AG04449 (cell line): ENCODE measurements at regions of chr17 and their contacts with region 1.

Region 1: DNA sequence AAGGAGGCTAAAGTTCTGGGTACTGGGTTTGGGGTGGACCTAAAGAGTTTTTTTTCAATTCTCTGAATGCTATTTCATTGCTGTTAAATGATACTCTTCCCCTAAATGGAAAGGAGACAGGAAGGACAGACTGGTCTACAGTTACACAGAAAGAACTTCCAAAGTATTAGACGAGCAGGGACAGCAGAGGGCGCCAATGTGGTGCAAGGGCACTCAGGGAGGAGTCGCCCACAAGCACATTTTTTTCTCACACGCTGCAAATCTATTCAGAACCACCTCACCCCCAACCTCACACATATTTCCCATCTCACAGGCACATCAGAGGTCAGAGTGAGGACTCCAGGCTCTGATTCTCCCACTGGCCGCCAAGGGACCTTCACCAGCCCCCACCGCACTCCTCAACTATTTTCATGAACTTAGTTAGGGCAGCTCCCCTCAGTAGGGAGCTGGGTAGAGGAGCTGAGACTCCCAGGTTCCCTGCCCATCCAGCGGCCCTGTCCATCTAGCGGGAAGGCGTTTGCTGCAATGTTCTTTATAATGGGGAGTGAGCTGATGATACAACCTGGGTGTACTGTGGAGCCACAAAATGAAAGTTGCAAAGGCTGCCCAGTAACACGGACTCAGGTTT is 6.8 kb upstream of the CA4 start:
- DNase-seq: peak; percentile 51
- H3K4me3 ChIP-seq: no peak overlapping the region
- CTCF ChIP-seq: peak; percentile 84

Region 2: GRCh38 chr17:60154616-60155426 is 11.8 kb after region 1 on chr17:
- CTCF ChIA-PET with region 1: interaction called, 71 read pairs
- POLR2A ChIA-PET with region 1: interaction called, 3 read pairs
- DNase-seq: peak; percentile 31
- H3K4me3 ChIP-seq: no peak overlapping the region
- CTCF ChIP-seq: no peak

Region 3: GRCh38 chr17:60169921-60170742 is 27.1 kb after region 1 on chr17:
- CTCF ChIA-PET with region 1: interaction called, 32 read pairs
- POLR2A ChIA-PET with region 1: no interaction called
- DNase-seq: no peak
- H3K4me3 ChIP-seq: no peak overlapping the region
- CTCF ChIP-seq: no peak

Region 4: GRCh38 chr17:60231234-60231633 is 88.2 kb after region 1 on chr17:
- CTCF ChIA-PET with region 1: interaction called, 31 read pairs
- POLR2A ChIA-PET with region 1: interaction called, 3 read pairs
- DNase-seq: no peak
- H3K4me3 ChIP-seq: no peak overlapping the region
- CTCF ChIP-seq: peak; percentile 32

Region 5: GRCh38 chr17:60435244-60436167 is 292.5 kb after region 1 on chr17:
- CTCF ChIA-PET with region 1: interaction called, 18 read pairs
- POLR2A ChIA-PET with region 1: no interaction called
- DNase-seq: peak; percentile 58
- H3K4me3 ChIP-seq: no peak overlapping the region
- CTCF ChIP-seq: peak; percentile 82

Region 6: DNA sequence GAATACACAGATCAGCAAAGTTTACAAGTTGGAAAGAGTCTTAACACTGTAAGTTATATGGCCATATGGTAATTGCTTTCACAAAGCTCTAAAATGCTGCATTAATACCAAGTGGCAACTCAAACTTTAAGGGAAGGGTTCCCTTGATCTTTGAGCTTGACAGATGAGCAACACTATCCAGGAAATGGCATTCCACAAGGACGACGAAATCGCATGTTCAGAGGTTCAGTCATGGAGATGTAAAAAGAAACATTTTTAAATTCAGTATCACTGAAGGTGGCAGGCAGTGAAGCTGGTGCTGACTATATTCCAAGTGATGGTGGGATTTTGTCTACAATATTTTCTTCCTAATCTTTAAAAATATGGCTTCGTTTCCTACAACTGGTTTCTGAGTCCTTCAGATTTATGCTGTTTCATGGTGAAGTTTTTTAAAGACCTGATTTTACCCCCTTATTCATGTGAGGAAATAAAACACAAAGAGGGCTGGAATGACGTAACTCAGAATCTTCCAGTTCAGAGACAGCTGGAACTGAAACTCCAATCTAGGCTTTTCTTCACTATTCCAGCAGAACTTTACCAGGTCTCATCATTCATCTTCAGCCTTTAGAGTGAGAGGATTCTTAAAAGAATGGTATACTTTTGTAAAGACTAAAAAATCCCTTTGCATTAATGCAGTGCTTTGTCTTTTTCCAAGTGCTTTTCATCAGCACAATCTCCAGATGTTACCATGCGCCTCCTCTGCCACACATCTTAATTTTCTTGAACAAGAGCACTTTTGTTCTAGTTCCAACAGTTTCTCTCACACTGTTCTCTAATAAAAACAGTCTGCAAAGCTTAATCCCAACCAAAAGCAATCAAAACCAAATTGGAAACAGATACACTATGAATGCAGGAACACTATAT is 299.5 kb after region 1 on chr17:
- CTCF ChIA-PET with region 1: interaction called, 11 read pairs
- POLR2A ChIA-PET with region 1: no interaction called
- DNase-seq: no peak
- H3K4me3 ChIP-seq: no peak overlapping the region
- CTCF ChIP-seq: no peak